CD14-positive monocyte (primary cell): ENCODE measurements at regions of chr12 and their contacts with region 1.

Region 1: DNA sequence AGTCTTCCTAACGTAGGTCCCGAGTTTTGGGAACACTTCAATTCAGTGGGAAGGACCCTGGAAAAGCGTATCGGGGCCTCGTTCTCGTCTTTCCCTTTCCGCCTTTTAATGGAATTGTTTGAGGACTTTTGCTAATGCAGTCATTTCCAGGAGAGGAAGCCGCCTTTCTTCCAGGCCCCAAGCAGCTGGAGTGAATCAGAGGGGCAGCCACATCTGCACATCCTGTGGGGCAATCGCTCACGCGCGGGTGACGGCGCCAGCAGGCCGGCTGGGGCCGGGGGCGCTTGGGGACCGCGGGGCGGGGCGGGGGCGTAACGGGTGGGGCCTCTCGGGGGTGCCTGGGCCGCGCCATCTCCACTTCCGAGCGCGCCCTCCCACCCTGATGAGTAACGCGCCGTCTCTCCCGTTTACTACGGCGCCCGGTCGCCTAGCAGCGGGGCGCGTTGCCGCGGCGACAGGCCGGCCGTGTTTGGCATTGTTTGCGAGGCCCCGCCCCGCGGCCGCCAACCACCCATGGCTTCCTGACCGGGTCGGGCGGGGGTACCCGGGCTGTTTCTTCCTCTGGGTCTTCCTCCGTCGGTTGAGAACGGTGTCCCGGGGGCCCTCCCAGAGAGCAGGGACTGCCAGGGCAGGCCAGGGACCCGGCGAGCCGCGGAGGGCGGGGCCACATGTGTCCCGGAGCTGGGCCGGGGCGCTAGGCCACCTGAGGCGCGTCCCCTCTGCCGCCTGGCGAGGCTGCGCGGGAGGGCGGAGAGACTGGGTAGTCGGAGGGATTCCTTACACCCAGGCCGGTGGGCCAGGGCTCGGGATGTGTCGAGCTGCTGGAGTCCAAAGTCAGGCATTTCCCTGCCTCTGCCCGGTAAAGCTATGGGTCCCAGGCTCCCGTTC is 2.3 kb downstream of the GSG1 start:
- DNase-seq: peak; percentile 98 to 99 (median 98)
- H3K4me3 ChIP-seq: peak overlapping the region; percentile 52 to 73 (median 54)
- H3K4me3 Mint-ChIP-seq: peak overlapping the region; percentile 74 to 87
- H3K27ac ChIP-seq: peak overlapping the region; percentile 94 to 98
- H3K27ac Mint-ChIP-seq: peak overlapping the region; percentile 98 to 100 (median 100)
- H3K4me1 ChIP-seq: peaks cover 59 to 60% of the 10 kb centered on the region in 2 donors
- H3K4me1 Mint-ChIP-seq: peaks cover 67% of the 10 kb centered on the region
- H3K27me3 ChIP-seq: no peaks in the 10 kb centered on the region
- H3K27me3 Mint-ChIP-seq: peaks cover 0 to 8% (median 1%) of the 10 kb centered on the region in 3 donors
- CTCF ChIP-seq: no peak

Region 2: DNA sequence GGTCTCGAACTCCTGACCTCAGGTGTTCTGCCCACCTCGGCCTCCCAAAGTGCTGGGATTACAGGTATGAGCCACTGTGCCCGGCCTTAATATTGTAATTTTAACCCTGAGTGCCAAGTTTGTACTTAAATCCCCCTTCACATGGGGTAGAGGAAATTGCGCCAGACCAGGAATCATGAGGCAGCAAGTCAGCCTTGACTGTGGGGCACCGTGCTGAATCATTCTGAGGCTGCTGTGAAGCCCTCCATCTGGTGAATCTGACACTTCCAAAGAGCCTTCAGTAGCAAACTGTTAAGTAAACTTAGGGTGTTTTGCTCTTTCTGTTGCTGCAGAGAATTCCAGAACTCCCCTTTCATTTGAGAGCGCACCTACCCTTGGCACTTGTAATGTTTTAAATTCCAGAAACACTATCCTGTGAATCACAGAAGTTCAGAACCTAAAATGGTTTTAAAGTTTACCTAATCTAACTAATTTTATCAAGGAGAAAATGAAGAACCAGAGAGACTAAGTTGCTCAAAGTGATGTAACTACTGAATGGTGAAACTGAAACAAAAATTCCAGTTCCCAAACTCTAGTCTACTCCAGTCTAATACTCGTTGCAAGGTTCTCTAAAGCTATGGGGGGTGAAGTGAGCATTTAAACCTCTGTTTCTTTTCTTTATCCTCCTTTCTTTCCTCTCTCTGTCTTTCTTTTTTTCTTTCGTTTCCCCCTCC is 108.6 kb before region 1 on chr12:
- intact Hi-C with region 1: loop called in 1 of 2 experiments (anchors 5 kb)
- DNase-seq: peak; percentile 60 to 87 (median 87)
- H3K4me3 ChIP-seq: peak overlapping the region; percentile 16 to 66 (median 53)
- H3K4me3 Mint-ChIP-seq: peak overlapping the region; percentile 75 to 83
- H3K27ac ChIP-seq: peak overlapping the region; percentile 91 to 94
- H3K27ac Mint-ChIP-seq: peak overlapping the region; percentile 97 to 99 (median 98)
- H3K4me1 ChIP-seq: peaks cover 31 to 37% of the 10 kb centered on the region in 2 donors
- H3K4me1 Mint-ChIP-seq: peaks cover 50% of the 10 kb centered on the region
- H3K27me3 ChIP-seq: no peaks in the 10 kb centered on the region
- H3K27me3 Mint-ChIP-seq: no peaks in the 10 kb centered on the region
- CTCF ChIP-seq: no peak

Region 3: GRCh38 chr12:13154027-13154538 is 53.0 kb after region 1 on chr12:
- intact Hi-C with region 1: loop called in 1 of 2 experiments (anchors 5 kb)
- DNase-seq: peak; percentile 35 to 62 (median 52)
- H3K4me3 ChIP-seq: peak overlapping the region in 1 of 3 experiments; percentile 29
- H3K4me3 Mint-ChIP-seq: peak overlapping the region; percentile 18 to 46
- H3K27ac ChIP-seq: peak overlapping the region in 1 of 2 donors; percentile 34
- H3K27ac Mint-ChIP-seq: peak overlapping the region; percentile 43 to 85 (median 70)
- H3K4me1 ChIP-seq: peaks cover 13 to 15% of the 10 kb centered on the region in 2 donors
- H3K4me1 Mint-ChIP-seq: peaks cover 26% of the 10 kb centered on the region
- H3K27me3 ChIP-seq: no peaks in the 10 kb centered on the region
- H3K27me3 Mint-ChIP-seq: peaks cover 0 to 2% (median 2%) of the 10 kb centered on the region in 3 donors
- CTCF ChIP-seq: no peak

Region 4: GRCh38 chr12:13196130-13196921 is 95.2 kb after region 1 on chr12 and contains the start of gene EMP1:
- intact Hi-C with region 1: loop called in 1 of 2 experiments (anchors 2 kb)
- DNase-seq: peak; percentile 85 to 96 (median 92)
- H3K4me3 ChIP-seq: peak within 1 kb of the TSS; percentile 19 to 73 (median 39)
- H3K4me3 Mint-ChIP-seq: peak within 1 kb of the TSS; percentile 84 to 89
- H3K27ac ChIP-seq: peak within 1 kb of the TSS in 1 of 2 donors; percentile 66
- H3K27ac Mint-ChIP-seq: peak within 1 kb of the TSS; percentile 54 to 91 (median 78)
- H3K4me1 ChIP-seq: peaks cover 45% of the 10 kb centered on the region in 2 donors
- H3K4me1 Mint-ChIP-seq: peaks cover 61% of the 10 kb centered on the region
- H3K27me3 ChIP-seq: no peaks in the 10 kb centered on the region
- H3K27me3 Mint-ChIP-seq: peaks cover 4 to 9% (median 6%) of the 10 kb centered on the region in 3 donors
- CTCF ChIP-seq: no peak
- polyA plus RNA-seq, gene EMP1: 2.7 to 6.3 (median 3.1) TPM

Region 5: GRCh38 chr12:14960548-14961465 is 1859.7 kb after region 1 on chr12:
- intact Hi-C with region 1: loop called in 1 of 2 experiments (anchors 5 kb)
- DNase-seq: peak; percentile 75 to 86 (median 82)
- H3K4me3 ChIP-seq: peak overlapping the region; percentile 82 to 100 (median 95)
- H3K4me3 Mint-ChIP-seq: peak overlapping the region; percentile 95 to 99
- H3K27ac ChIP-seq: peak overlapping the region; percentile 88 to 96
- H3K27ac Mint-ChIP-seq: peak overlapping the region; percentile 95 to 99 (median 99)
- H3K4me1 ChIP-seq: peaks cover 74 to 93% of the 10 kb centered on the region in 2 donors
- H3K4me1 Mint-ChIP-seq: peaks cover 89% of the 10 kb centered on the region
- H3K27me3 ChIP-seq: no peaks in the 10 kb centered on the region
- H3K27me3 Mint-ChIP-seq: no peaks in the 10 kb centered on the region
- CTCF ChIP-seq: no peak